Calu3 (cell line): ENCODE measurements at regions of chr15 and their contacts with region 1.

Region 1: GRCh38 chr15:78709263-78709882 is 68.4 kb upstream of the CHRNB4 start:
- DNase-seq: peak; percentile 81
- H3K4me3 Mint-ChIP-seq: no peak overlapping the region
- H3K27ac Mint-ChIP-seq: no peak overlapping the region
- H3K4me1 Mint-ChIP-seq: peaks cover 19% of the 10 kb centered on the region
- H3K27me3 Mint-ChIP-seq: peaks cover 52% of the 10 kb centered on the region
- CTCF ChIP-seq: peak; percentile 82

Region 2: DNA sequence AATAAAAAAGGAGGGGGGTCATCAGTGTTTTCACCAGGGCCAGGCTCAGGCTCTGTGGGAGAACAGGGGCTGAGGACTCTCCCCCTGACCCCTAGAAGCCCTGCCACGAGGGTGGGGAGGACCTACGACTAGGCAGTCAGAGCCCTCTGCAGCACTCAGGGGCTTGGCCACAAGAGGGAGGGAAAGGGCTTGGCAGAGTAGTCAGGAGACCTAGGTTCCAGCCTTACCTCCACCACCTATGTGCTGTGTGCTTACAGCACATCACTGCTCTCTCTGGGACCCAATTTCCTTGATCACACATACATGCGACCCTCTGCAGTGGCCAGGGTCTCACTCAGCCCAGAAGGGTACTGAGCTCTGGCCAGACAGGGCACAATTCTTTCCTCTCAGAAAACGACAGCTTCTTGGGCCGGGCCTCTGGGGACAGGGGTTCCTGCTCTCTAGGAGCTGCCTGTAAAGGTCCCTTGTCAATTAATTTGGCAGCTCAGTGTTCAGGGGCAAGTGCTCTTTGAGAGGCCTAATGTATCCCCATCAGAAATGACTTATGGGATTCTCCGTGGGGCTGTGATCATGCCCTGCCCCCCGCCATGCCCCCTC is 393.6 kb before region 1 on chr15:
- CTCF ChIA-PET with region 1: no interaction called
- intact Hi-C with region 1: loop called (anchors 10 kb)
- DNase-seq: peak; percentile 35
- H3K4me3 Mint-ChIP-seq: no peak overlapping the region
- H3K27ac Mint-ChIP-seq: no peak overlapping the region
- H3K4me1 Mint-ChIP-seq: peaks cover 20% of the 10 kb centered on the region
- H3K27me3 Mint-ChIP-seq: peaks cover 42% of the 10 kb centered on the region
- CTCF ChIP-seq: peak; percentile 13

Region 3: DNA sequence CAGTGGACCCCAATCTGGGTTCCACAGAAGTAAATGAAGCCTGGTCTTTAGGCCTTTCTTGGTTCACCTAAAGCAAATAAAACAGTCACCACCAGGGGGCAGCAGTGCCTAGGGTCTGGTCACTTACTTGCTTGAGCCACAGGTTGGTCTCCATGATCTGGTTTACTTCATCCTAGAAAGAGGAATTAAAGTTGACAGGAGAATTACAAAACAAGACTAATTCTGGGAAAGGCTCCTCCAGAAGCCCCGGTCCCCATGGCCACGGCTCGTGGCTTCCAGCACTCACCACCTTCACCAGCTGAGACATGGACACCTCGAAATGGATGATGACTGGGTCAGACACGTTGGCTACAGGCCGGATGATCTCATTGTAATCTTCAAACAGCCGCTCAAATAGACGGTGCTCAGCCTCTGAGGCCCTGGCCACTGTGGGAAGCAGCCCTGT is 90.9 kb before region 1 on chr15:
- CTCF ChIA-PET with region 1: interaction called, 10 read pairs
- intact Hi-C with region 1: loop called (anchors 1 kb)
- DNase-seq: peak; percentile 95
- H3K4me3 Mint-ChIP-seq: no peak overlapping the region
- H3K27ac Mint-ChIP-seq: no peak overlapping the region
- H3K4me1 Mint-ChIP-seq: no peaks in the 10 kb centered on the region
- H3K27me3 Mint-ChIP-seq: peaks cover 57% of the 10 kb centered on the region
- CTCF ChIP-seq: peak; percentile 86

Region 4: GRCh38 chr15:78638658-78639314 is 70.6 kb before region 1 on chr15:
- CTCF ChIA-PET with region 1: interaction called, 7 read pairs
- intact Hi-C with region 1: loop called (anchors 1 kb)
- DNase-seq: peak; percentile 81
- H3K4me3 Mint-ChIP-seq: no peak overlapping the region
- H3K27ac Mint-ChIP-seq: no peak overlapping the region
- H3K4me1 Mint-ChIP-seq: no peaks in the 10 kb centered on the region
- H3K27me3 Mint-ChIP-seq: peaks cover 50% of the 10 kb centered on the region
- CTCF ChIP-seq: peak; percentile 80

Region 5: DNA sequence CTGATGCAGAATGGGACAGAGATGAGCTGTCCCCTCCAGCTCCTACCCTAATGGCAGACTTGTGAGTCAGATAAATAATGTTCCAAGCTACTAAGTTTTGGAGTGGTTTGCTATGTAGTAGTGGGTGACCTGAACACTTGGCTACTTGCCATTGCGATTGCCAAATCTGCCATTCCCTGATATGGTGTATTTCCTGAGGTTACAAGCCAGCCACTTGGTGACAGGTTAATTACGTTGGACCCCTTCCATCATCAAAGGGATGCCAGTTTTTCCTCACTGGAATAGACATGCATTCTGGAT is 196.9 kb after region 1 on chr15:
- CTCF ChIA-PET with region 1: no interaction called
- intact Hi-C with region 1: no loop called
- DNase-seq: peak; percentile 51
- H3K4me3 Mint-ChIP-seq: no peak overlapping the region
- H3K27ac Mint-ChIP-seq: no peak overlapping the region
- H3K4me1 Mint-ChIP-seq: no peaks in the 10 kb centered on the region
- H3K27me3 Mint-ChIP-seq: no peaks in the 10 kb centered on the region
- CTCF ChIP-seq: no peak